OCI-LY7 (cell line): ENCODE measurements at regions of chr19 and their contacts with region 1.

Region 1: GRCh38 chr19:16342002-16342715 is 17.5 kb downstream of the KLF2 start:
- DNase-seq: peak; percentile 73
- H3K4me3 ChIP-seq: peak overlapping the region; percentile 34
- H3K27ac ChIP-seq: peak overlapping the region; percentile 78
- H3K4me1 ChIP-seq: peaks cover 42% of the 10 kb centered on the region
- CTCF ChIP-seq: no peak

Region 2: DNA sequence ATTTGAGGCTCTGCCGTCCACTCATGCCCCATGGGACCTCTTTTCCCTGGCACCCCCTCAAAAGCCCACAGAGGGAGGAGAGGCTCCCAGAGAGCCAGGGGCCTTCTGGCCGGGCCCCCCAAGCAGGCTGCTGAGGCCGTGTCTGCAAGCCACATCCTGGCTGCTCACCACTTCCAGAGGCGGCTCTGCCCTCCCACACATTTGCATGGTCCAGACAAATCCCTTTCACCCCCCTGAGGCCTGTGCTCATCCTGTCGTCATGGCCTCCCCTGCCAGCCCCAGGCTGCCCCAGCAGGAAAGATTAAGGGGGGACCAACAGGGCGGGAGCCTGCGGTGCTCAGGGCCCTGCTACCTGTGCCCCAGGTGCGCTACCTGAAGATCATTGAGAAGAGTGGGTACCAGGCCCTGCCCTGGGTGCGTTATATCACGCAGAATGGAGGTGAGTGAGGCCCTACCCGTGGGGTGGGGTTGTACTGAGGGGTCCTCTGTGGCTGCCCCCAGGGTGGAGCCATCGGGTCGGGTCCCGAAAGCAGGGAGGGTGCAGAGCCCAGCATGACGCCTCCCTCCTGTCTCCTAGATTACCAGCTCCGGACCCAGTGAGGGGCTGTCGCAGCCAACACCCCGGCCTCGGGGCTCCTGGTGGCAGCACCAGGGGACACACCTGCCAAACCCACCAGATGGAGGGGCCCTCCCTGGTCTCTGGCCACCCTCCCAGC is 108.2 kb before region 1 on chr19:
- CTCF ChIA-PET with region 1: no interaction called
- POLR2A ChIA-PET with region 1: no interaction called
- intact Hi-C with region 1: no loop called
- DNase-seq: no peak
- H3K4me3 ChIP-seq: no peak overlapping the region
- H3K27ac ChIP-seq: no peak overlapping the region
- H3K4me1 ChIP-seq: peaks cover 6% of the 10 kb centered on the region
- CTCF ChIP-seq: no peak

Region 3: DNA sequence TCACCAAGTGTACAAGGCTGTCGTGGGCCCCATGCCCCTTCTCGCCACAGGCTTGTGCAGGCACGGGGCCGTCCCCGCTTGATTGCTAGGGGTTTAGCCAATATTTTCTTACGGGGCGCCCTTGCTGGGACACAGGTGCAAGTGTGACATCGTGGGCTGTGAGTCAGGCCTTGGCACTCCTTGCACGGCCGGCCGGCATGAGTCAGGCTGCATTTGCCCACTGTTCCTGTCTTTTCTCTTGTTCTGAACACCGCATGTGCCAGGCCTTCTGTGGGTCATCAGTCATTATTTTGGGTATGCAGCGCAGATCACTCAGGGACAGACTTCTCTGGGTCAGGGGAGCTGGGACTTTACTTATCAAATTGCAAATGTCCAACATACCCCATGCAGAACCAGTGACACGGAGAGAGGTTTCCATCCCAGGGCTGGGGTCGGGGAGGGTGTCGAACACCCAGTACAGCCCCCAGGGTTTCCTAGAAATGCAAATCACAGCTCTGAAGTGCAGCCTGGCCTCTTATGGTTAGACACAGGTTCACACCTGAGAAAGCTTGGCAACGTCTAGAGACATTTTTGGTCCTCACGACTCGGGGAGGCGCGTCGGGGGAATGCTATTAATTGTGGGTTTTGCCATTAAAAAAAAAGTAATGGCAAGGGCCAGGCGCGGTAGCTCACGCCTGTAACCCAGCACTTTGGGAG is 40.0 kb before region 1 on chr19:
- CTCF ChIA-PET with region 1: no interaction called
- POLR2A ChIA-PET with region 1: no interaction called
- intact Hi-C with region 1: no loop called
- DNase-seq: peak; percentile 90
- H3K4me3 ChIP-seq: peak overlapping the region; percentile 35
- H3K27ac ChIP-seq: peak overlapping the region; percentile 93
- H3K4me1 ChIP-seq: peaks cover 64% of the 10 kb centered on the region
- CTCF ChIP-seq: no peak

Region 4: DNA sequence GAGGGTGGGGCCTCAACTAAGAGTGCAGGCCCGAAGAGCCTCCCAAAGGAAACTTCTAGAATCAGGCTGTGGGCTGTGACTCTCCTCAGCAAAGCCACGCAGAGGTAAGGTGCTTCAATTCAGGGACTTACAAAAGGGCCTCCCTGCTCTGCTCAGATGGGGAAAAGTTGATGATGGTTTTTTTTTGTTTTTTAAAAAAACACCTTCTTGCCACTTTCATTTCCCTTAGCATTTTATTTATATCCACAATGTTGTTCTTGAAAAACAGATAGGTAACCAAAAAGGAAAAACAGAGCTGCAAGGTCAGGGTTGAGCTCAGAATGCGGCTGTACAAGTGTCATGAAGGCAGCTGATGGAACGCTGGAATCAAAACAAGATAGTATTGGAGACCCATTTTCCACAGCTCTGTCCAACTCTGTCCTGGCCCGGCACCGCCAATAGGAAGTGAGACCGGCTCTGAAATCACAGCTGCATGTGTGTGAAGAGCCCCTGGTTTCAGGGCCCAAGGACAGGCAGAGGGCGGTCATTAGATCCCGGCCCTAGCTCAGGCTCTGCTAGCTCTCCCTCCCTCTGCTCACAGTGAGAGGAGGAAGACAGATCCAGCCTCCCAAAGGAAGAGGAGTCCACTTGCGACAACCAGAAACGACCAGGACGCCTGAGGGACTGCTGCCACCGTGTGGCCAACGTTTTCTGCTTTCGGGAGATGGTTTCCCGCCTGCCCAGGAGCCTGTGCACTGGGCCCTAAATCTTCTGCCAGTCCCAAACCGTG is 40.8 kb after region 1 on chr19:
- CTCF ChIA-PET with region 1: no interaction called
- POLR2A ChIA-PET with region 1: interaction called, 11 read pairs
- intact Hi-C with region 1: no loop called
- DNase-seq: peak; percentile 82
- H3K4me3 ChIP-seq: peak overlapping the region; percentile 15
- H3K27ac ChIP-seq: peak overlapping the region; percentile 61
- H3K4me1 ChIP-seq: peaks cover 30% of the 10 kb centered on the region
- CTCF ChIP-seq: peak; percentile 91